BJ (cell line): ENCODE measurements at regions of chr22 and their contacts with region 1.

Region 1: GRCh38 chr22:35582861-35583670 is 34.1 kb downstream of the MB start:
- DNase-seq: no peak
- H3K4me3 ChIP-seq: no peak overlapping the region
- H3K27me3 ChIP-seq: no peaks in the 10 kb centered on the region
- CTCF ChIP-seq: peak; percentile 93

Region 2: GRCh38 chr22:35350539-35351503 is 232.2 kb before region 1 on chr22:
- CTCF ChIA-PET with region 1: interaction called, 18 read pairs
- POLR2A ChIA-PET with region 1: no interaction called
- DNase-seq: peak; percentile 49
- H3K4me3 ChIP-seq: peak overlapping the region; percentile 53
- H3K27me3 ChIP-seq: no peaks in the 10 kb centered on the region
- CTCF ChIP-seq: peak; percentile 86

Region 3: DNA sequence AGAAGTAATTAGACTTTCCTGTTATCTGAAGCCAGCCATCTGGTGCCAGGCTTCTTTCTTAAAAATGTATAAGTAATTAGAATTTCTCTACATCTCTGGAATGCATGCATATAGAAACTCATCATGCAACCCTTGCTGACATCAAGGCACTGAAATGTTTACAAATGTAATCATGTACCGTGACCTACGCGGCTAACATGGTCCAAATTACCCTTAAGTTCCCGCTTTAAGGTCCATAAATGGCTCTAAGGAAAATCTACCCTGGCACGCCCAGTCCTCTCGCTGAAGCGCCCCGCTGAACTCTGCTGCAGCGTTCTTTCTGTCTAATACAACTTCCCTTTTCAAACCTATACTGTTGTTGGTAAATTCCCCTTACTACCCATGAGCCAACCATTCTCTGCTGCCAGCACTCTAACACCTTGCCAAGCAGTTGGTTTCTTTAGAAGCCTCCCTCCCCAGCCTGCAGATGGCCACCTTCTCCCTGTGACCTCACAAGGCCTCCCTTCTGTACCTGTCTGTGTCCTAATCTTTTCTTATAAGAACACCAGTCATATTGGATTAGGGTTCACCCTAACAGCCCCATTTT is 215.7 kb before region 1 on chr22:
- CTCF ChIA-PET with region 1: no interaction called
- POLR2A ChIA-PET with region 1: interaction called, 11 read pairs
- DNase-seq: no peak
- H3K4me3 ChIP-seq: no peak overlapping the region
- H3K27me3 ChIP-seq: no peaks in the 10 kb centered on the region
- CTCF ChIP-seq: no peak

Region 4: GRCh38 chr22:35418088-35418487 is 165.0 kb before region 1 on chr22:
- CTCF ChIA-PET with region 1: interaction called, 14 read pairs
- POLR2A ChIA-PET with region 1: no interaction called
- DNase-seq: no peak
- H3K4me3 ChIP-seq: no peak overlapping the region
- H3K27me3 ChIP-seq: no peaks in the 10 kb centered on the region
- CTCF ChIP-seq: no peak

Region 5: GRCh38 chr22:35454416-35455054 is 128.5 kb before region 1 on chr22:
- CTCF ChIA-PET with region 1: interaction called, 11 read pairs
- POLR2A ChIA-PET with region 1: no interaction called
- DNase-seq: no peak
- H3K4me3 ChIP-seq: no peak overlapping the region
- H3K27me3 ChIP-seq: peaks cover 5% of the 10 kb centered on the region; the same call in 1 of the 2 replicates
- CTCF ChIP-seq: no peak

Region 6: GRCh38 chr22:35622191-35622913 is 39.3 kb after region 1 on chr22:
- CTCF ChIA-PET with region 1: interaction called, 13 read pairs
- POLR2A ChIA-PET with region 1: no interaction called
- DNase-seq: no peak
- H3K4me3 ChIP-seq: no peak overlapping the region
- H3K27me3 ChIP-seq: no peaks in the 10 kb centered on the region
- CTCF ChIP-seq: no peak